Colonic mucosa (tissue), 4 donors: ENCODE measurements at regions of chr13 and their contacts with region 1.

Region 1: GRCh38 chr13:112102243-112102642 is 35.3 kb downstream of the SOX1 start:
- DNase-seq: no peak
- H3K4me3 ChIP-seq: no peak overlapping the region
- H3K27ac ChIP-seq: no peak overlapping the region
- H3K4me1 ChIP-seq: no peaks in the 10 kb centered on the region
- H3K27me3 ChIP-seq: peaks cover 53% of the 10 kb centered on the region
- CTCF ChIP-seq: peak; percentile 15

Region 2: DNA sequence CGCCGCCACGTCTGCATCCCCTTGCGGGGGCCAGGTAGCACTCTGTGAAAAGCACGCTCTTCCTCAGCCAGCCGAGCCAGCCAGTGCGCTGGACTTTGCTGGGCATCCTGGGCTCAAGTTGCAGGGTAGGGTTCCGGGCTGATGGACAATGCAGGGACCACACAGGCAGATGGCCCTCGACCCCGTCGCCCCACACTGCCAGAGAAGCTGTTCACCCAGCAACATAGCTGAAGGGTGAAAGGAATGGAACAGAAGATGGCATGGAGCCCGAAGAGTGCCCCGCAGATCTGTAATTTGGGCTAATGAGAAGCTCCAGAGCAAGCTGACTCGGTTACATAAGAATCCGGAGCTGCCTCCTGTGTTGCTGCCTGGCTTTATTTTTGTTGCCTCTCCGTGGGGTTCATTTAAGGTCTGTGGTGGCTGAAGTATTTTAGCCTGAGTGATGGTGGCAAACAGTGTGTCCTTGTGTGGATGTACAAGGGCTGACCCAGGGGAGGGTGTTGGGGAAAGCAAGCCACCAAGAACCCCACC is 70.5 kb after region 1 on chr13:
- intact Hi-C with region 1: no loop called
- DNase-seq: no peak
- H3K4me3 ChIP-seq: no peak overlapping the region
- H3K27ac ChIP-seq: no peak overlapping the region
- H3K4me1 ChIP-seq: no peaks in the 10 kb centered on the region
- H3K27me3 ChIP-seq: no peaks in the 10 kb centered on the region
- CTCF ChIP-seq: no peak

Region 3: DNA sequence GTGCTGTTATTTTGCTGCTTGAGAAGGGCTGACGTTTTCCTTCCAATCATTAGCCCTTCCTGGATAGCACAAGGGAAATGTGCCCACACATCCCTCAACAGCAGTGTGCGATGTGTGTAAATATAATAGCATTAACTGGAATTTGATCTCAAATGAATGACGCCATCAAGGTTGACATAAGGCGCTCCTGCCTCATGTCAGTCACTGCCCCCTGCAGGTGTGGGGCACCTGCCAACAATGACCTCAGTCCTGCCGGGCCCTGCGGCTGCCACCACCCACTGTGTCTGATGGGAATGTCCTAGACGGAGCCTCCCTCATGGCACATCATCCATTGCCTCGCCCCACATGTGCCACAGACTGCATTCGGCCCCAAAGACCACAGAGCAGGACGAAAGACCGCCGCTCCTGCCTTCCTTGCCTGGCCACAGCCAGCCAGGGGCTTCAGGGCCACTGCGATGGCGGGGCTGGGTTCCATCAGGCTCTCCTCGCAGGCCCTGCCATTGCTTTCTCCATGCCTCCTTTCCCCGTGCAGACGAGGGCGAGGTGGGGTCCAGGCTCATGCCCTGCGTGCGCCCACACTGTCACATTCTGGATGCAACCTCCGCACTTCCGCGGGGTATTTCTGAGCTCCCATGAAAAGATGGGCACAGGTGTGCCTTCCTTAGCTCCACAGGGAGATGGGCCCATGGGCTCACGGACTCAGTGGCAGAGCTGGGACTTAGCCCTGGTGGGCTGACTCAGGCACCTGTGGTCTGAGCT is 111.4 kb after region 1 on chr13:
- intact Hi-C with region 1: loop called (anchors 5 kb)
- DNase-seq: peak; percentile 69
- H3K4me3 ChIP-seq: no peak overlapping the region
- H3K27ac ChIP-seq: no peak overlapping the region
- H3K4me1 ChIP-seq: no peaks in the 10 kb centered on the region
- H3K27me3 ChIP-seq: no peaks in the 10 kb centered on the region
- CTCF ChIP-seq: peak; percentile 41